ENCODE measurements at regions of chr14 and their contacts with region 1.

Region 1: GRCh38 chr14:65164068-65164824 is 61.9 kb upstream of the MAX start:
- DNase-seq: peak in 2 of 5 donors; percentile 29 to 43
- H3K4me3 ChIP-seq: no peak overlapping the region
- H3K4me3 Mint-ChIP-seq: no peak overlapping the region
- H3K27ac ChIP-seq: no peak overlapping the region
- H3K27ac Mint-ChIP-seq: no peak overlapping the region
- H3K4me1 ChIP-seq: no peaks in the 10 kb centered on the region
- H3K4me1 Mint-ChIP-seq: no peaks in the 10 kb centered on the region
- H3K27me3 ChIP-seq: no peaks in the 10 kb centered on the region
- H3K27me3 Mint-ChIP-seq: peaks cover 0 to 4% of the 10 kb centered on the region in 2 donors

Region 2: DNA sequence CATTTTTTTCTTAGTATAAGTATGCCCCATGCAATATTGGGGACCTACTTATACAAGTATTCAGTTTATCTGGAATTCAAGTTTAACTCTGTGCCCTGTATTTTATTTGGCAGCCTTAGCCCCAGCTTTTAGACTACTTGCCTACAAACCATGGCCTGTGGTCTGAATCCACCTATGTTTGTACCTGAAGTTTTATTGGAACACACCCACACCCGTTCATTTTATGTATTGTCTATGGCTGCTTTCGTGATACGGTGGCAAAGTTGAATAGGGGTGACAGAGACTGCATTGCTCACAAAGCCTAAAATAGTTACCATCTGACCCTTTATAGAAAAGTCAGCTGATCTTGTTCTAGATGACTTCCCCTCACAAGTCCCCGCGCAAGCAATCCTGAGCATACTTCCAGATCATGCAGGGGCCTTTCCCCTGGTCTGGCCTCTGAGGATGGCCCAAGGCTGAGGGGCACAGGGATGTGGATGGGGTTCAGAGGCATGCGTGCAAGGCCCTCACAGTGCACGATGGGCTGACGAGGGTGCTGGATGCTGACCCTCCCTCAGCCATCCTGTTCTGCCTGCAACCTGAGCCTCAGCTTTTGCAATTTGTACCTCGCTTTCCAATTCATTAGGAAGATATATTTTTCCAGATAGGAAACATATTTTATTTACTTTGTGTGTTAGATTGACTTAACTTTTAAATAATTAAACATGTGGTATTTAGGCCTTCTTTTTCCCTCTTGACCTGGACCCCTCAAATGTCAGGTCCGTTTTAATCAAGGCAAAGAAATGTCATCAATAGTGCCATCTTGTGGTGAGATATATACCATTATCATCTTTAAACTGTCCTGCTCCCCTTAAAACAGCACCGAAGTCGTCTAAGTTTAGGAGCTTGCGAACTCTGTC is 794.7 kb after region 1 on chr14:
- CTCF ChIA-PET with region 1: interaction called, 19 read pairs
- POLR2A ChIA-PET with region 1: no interaction called
- DNase-seq: peak in 2 of 5 donors; percentile 22 to 46
- H3K4me3 ChIP-seq: no peak overlapping the region
- H3K4me3 Mint-ChIP-seq: no peak overlapping the region
- H3K27ac ChIP-seq: no peak overlapping the region
- H3K27ac Mint-ChIP-seq: no peak overlapping the region
- H3K4me1 ChIP-seq: peaks cover 16% of the 10 kb centered on the region
- H3K4me1 Mint-ChIP-seq: peaks cover 25% of the 10 kb centered on the region in 3 donors
- H3K27me3 ChIP-seq: no peaks in the 10 kb centered on the region
- H3K27me3 Mint-ChIP-seq: no peaks in the 10 kb centered on the region

Region 3: GRCh38 chr14:66070509-66071319 is 906.5 kb after region 1 on chr14:
- CTCF ChIA-PET with region 1: interaction called, 13 read pairs
- POLR2A ChIA-PET with region 1: no interaction called
- DNase-seq: peak; percentile 49 to 75 (median 56)
- H3K4me3 ChIP-seq: no peak overlapping the region
- H3K4me3 Mint-ChIP-seq: no peak overlapping the region
- H3K27ac ChIP-seq: no peak overlapping the region
- H3K27ac Mint-ChIP-seq: peak overlapping the region in 1 of 8 donors; percentile 43
- H3K4me1 ChIP-seq: no peaks in the 10 kb centered on the region
- H3K4me1 Mint-ChIP-seq: peaks cover 4 to 5% (median 4%) of the 10 kb centered on the region in 3 donors
- H3K27me3 ChIP-seq: no peaks in the 10 kb centered on the region
- H3K27me3 Mint-ChIP-seq: peaks cover 4 to 19% of the 10 kb centered on the region in 2 donors

Region 4: DNA sequence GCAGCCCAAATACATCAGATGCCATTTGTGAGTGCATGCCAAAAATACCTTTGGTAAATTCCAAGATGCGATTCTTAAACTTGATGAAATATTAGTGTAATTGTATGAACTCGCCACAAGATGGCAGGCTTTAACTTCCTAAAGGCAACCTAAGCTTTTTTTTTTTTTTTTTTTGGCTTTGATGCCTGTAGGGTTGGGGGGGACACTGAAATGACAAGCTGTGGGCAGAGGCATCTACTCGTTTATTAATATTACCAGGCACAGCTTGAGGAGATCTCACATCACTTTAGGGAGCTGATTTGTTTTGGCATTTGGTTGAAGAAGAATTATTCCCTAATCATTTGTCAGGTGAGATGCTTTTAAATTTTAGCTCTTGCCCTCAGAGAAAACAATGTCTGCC is 1195.3 kb after region 1 on chr14:
- CTCF ChIA-PET with region 1: no interaction called
- POLR2A ChIA-PET with region 1: interaction called, 12 read pairs
- DNase-seq: peak in 2 of 5 donors; percentile 24 to 43
- H3K4me3 ChIP-seq: no peak overlapping the region
- H3K4me3 Mint-ChIP-seq: no peak overlapping the region
- H3K27ac ChIP-seq: no peak overlapping the region
- H3K27ac Mint-ChIP-seq: no peak overlapping the region
- H3K4me1 ChIP-seq: no peaks in the 10 kb centered on the region
- H3K4me1 Mint-ChIP-seq: no peaks in the 10 kb centered on the region
- H3K27me3 ChIP-seq: no peaks in the 10 kb centered on the region
- H3K27me3 Mint-ChIP-seq: peaks cover 9 to 13% of the 10 kb centered on the region in 2 donors